ENCODE measurements at regions of chr1 and their contacts with region 1.

Region 1: DNA sequence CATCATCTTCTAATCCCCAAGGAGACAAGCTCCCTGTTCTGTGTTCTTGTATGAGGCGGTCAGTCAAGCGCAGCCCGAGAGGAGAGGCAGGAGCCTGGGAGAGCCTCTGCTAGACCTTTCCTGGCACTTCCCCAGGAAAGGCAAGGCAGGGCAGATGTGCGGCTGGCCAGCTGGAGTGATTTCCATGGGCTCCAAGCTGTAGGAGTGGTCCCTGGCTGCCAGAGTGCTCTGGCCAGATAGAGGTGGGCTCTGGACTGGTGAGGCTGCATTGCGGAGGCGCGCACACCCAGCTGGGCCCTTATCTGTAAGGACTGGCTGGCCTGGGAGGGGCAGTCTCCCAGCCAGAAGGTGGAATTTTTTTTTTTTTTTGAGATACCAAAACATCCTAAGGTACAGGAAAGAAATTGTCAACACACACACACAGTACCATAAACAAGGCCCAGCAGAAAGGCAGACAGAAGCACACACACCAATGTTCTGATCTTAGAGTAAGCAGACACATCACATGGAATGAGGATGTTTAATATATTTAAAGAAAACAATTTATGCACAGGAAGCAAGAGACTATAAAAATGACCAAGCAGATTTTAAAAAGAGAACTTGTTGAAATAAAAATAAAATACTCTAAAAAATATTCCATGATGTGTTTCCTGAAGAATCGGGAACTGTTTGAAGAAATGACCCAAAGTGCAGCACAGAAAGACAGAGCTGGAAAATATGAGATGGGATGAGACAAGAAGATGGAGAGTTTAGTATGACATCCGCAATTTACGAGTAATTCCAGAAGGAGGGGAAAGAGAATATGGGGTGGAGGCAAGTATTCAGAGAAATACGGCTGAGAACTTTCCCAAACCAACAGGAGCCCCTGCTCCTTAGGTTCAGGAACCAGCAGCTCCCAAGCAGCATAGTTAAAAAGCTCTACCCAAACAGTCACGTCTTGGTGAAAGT is 13.4 kb downstream of the IBA57 start:
- DNase-seq: peak in 1 of 35 experiments; percentile 2
- ATAC-seq: no peak
- H3K4me3 ChIP-seq: no peak overlapping the region
- H3K4me3 Mint-ChIP-seq: no peak overlapping the region
- H3K27ac ChIP-seq: no peak overlapping the region
- H3K27ac Mint-ChIP-seq: no peak overlapping the region
- H3K4me1 ChIP-seq: peaks cover 0 to 4% of the 10 kb centered on the region in 2 experiments
- H3K4me1 Mint-ChIP-seq: peaks cover 0 to 7% (median 0%) of the 10 kb centered on the region in 3 donors
- H3K27me3 ChIP-seq: no peaks in the 10 kb centered on the region
- H3K27me3 Mint-ChIP-seq: no peaks in the 10 kb centered on the region

Region 2: DNA sequence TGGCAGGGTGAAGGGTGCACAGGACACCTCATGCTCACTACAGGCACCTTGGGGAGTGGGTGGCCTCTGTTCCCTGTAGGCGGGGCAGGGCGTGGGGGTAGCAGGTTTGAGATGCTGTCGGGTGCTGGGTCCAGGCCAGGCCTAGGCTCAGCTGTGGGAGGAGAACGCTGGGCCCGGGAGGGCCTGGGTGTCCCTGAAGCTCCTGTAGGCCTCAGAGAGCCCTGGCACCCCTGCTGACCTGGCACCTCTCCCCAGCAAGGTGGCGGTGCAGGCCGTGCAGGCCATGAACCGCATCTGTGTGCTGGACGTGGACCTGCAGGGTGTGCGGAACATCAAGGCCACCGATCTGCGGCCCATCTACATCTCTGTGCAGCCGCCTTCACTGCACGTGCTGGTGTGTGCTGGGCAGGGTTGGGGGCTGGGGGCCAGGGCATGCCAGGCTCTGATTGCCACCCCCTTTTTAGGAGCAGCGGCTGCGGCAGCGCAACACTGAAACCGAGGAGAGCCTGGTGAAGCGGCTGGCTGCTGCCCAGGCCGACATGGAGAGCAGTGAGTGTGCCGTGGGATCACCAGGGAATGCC is 31.8 kb before region 1 on chr1:
- CTCF ChIA-PET with region 1: no interaction called
- POLR2A ChIA-PET with region 1: interaction called in 1 of 2 experiments, 12 read pairs
- DNase-seq: no peak
- ATAC-seq: no peak
- H3K4me3 ChIP-seq: no peak overlapping the region
- H3K4me3 Mint-ChIP-seq: no peak overlapping the region
- H3K27ac ChIP-seq: no peak overlapping the region
- H3K27ac Mint-ChIP-seq: no peak overlapping the region
- H3K4me1 ChIP-seq: peaks cover 3 to 53% of the 10 kb centered on the region in 2 experiments
- H3K4me1 Mint-ChIP-seq: peaks cover 26 to 29% (median 28%) of the 10 kb centered on the region in 3 donors
- H3K27me3 ChIP-seq: peaks cover 0 to 2% of the 10 kb centered on the region in 2 experiments
- H3K27me3 Mint-ChIP-seq: no peaks in the 10 kb centered on the region

Measured in T-cell (primary cell).